ENCODE measurements at regions of chr6 and their contacts with region 1.

Region 1: GRCh38 chr6:88963139-88964090 is at the start of gene RNGTT:
- DNase-seq: peak; percentile 97
- H3K4me3 Mint-ChIP-seq: peak within 1 kb of the TSS; percentile 98
- H3K27ac Mint-ChIP-seq: peak within 1 kb of the TSS; percentile 84
- H3K4me1 Mint-ChIP-seq: peaks cover 33% of the 10 kb centered on the region
- H3K27me3 Mint-ChIP-seq: peaks cover 7% of the 10 kb centered on the region
- total RNA-seq, gene RNGTT: 21.6 and 25.3 TPM in 2 replicates

Region 2: DNA sequence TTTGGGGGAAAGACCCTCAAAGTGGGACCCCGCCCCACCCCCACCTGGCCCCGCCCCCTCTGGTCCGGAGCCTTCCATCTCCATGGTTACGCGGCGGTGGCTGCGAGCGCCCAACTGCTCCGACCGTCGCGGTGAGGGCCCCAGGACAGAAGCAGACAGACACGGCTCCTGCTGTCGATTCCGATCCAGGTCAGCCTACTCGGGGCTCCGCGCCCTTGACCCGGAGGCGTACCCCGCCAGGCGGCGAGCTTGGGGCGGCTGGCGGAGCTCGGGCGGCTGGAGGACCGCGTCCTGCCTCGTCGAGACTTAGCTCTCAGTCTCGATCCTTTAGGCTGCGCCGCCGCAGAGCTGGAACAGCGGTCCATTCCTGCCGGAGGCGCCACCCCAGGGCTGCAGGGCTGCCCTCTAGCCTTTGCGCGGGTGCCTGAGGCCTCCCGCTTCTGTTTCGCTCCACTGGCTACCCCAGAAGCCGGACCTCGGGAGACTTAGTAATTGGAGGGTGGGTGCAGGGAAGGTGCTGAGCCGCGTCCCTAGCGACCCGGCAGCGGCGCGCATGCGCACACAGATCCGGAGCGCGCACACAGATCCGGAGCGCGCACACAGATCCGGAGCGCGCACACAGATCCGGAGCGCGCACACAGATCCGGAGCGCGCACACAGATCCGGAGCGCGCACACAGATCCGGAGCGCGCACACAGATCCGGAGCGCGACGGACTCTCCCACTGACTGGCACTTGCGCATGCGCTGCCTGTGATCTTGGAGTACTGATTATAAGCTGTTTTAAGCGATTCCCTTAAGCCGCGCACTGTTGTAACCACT is 1555.3 kb before region 1 on chr6 and contains the start of gene CFAP206:
- intact Hi-C with region 1: loop called (anchors 5 kb)
- DNase-seq: peak; percentile 66
- H3K4me3 Mint-ChIP-seq: peak within 1 kb of the TSS; percentile 84
- H3K27ac Mint-ChIP-seq: peak within 1 kb of the TSS; percentile 76
- H3K4me1 Mint-ChIP-seq: peaks cover 16% of the 10 kb centered on the region
- H3K27me3 Mint-ChIP-seq: peaks cover 28% of the 10 kb centered on the region
- total RNA-seq, gene CFAP206: 0.20 TPM in 1 of 2 replicates, not detected in the other

Region 3: GRCh38 chr6:87589693-87590549 is 1373.5 kb before region 1 on chr6 and contains the starts of genes ORC3 and RARS2:
- intact Hi-C with region 1: loop called (anchors 1 kb)
- DNase-seq: peak; percentile 96
- H3K4me3 Mint-ChIP-seq: peak within 1 kb of the TSS; percentile 90
- H3K27ac Mint-ChIP-seq: peak within 1 kb of the TSS; percentile 79
- H3K4me1 Mint-ChIP-seq: peaks cover 42% of the 10 kb centered on the region
- H3K27me3 Mint-ChIP-seq: no peaks in the 10 kb centered on the region
- total RNA-seq, gene ORC3: 34.7 and 38.6 TPM in 2 replicates
- total RNA-seq, gene RARS2: 24.6 and 24.7 TPM in 2 replicates

Region 4: DNA sequence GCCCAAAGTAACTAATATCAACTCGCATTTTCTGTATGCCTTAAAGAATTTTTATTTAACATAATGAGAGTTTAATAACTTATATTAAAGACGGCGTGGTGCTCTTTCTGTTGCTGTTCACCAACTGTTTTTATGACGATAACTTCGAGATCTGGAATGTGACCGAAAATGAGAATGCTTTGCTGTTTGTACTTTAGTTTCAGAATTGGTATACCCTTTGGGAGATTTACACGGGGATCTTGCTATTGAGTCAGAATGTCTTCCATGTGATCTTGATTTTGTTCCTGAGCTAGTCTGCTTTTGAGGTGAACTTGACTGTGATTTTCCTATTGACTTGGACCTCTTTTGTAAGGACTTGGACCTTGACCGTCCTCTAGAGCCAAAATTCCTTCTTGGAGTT is 135.0 kb after region 1 on chr6:
- intact Hi-C with region 1: no loop called
- DNase-seq: no peak
- H3K4me3 Mint-ChIP-seq: no peak overlapping the region
- H3K27ac Mint-ChIP-seq: no peak overlapping the region
- H3K4me1 Mint-ChIP-seq: peaks cover 7% of the 10 kb centered on the region
- H3K27me3 Mint-ChIP-seq: no peaks in the 10 kb centered on the region

Region 5: DNA sequence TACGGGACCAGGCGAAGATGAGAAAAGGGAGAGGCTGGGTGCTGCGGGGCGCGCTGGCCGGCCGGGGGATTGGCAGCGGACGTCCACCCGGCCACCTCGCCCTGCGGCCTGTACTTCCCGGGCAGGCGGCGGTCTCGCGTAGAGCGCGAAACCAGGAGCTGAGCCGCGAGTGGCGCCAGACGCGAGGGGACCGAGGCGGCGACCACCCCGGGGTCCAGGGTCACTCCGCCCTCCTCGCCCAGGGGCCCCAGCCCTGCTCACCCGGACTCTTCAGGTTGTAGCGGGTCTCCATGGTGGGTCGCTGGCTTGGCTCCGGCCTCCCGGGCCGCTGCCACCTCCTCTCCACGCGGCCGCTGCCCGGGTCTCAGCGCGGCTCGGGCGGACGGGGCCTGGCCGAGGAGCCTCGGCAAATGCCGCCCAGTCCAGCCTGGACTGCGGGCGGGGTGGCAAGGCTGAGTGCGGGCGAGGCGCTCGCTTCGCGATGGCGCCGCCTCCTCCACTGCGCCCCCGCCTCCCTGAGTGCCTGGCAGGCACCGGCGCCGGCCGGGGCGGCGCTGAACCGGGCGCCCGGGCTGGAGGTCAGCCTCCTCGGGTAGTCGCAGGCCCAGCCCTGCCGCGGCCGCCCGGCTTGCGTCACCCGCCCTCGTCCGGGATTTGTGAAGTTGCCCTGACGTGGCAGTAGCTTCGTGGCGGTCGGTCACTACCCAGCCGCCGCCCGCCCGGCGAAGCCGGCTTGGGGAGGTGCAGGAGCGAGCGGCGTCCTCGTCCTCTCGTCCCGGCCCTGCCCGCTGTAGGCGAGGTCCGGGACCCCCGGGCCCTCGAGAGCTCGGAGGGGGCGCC is 389.1 kb after region 1 on chr6 and contains the start of gene UBE2J1:
- intact Hi-C with region 1: loop called (anchors 1 kb)
- DNase-seq: peak; percentile 75
- H3K4me3 Mint-ChIP-seq: peak within 1 kb of the TSS; percentile 96
- H3K27ac Mint-ChIP-seq: peak within 1 kb of the TSS; percentile 96
- H3K4me1 Mint-ChIP-seq: peaks cover 82% of the 10 kb centered on the region
- H3K27me3 Mint-ChIP-seq: no peaks in the 10 kb centered on the region
- total RNA-seq, gene UBE2J1: 38.1 and 40.5 TPM in 2 replicates

Region 6: DNA sequence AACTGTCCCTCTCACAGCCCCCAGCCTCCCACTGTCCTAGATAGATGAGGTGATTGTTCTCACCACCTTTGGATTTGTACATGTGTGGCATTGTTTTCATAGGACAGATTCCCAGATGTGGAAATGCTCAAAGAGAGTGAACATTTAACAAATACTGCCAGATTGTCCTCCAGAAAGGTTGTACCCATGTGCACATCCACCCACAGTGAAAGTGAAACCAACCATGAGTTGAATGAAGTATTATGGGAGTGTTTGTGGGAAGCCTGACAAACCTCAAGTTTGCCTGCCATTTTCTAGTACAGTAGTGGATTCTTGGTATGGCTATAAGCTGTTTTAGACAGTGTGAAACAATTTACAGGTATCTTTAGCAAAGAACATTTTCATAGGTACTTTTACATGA is 512.2 kb after region 1 on chr6:
- intact Hi-C with region 1: loop called (anchors 1 kb)
- DNase-seq: peak; percentile 38
- H3K4me3 Mint-ChIP-seq: peak overlapping the region; percentile 5
- H3K27ac Mint-ChIP-seq: peak overlapping the region; percentile 37
- H3K4me1 Mint-ChIP-seq: peaks cover 27% of the 10 kb centered on the region
- H3K27me3 Mint-ChIP-seq: peaks cover 3% of the 10 kb centered on the region

Region 7: GRCh38 chr6:90586836-90587638 is 1623.6 kb after region 1 on chr6 and contains the start of gene MAP3K7:
- intact Hi-C with region 1: loop called (anchors 1 kb)
- DNase-seq: peak; percentile 92
- H3K4me3 Mint-ChIP-seq: peak within 1 kb of the TSS; percentile 93
- H3K27ac Mint-ChIP-seq: peak within 1 kb of the TSS; percentile 96
- H3K4me1 Mint-ChIP-seq: peaks cover 39% of the 10 kb centered on the region
- H3K27me3 Mint-ChIP-seq: peaks cover 8% of the 10 kb centered on the region
- total RNA-seq, gene MAP3K7: 31.0 and 35.9 TPM in 2 replicates

Measured in activated T-helper 1 cell treated with anti-CD3 and anti-CD28 coated beads, Interleukin-12 subunit alpha, Interleukin-12 subunit beta, Interleukin-2, Interleukin-4 antibody, amounts not matched to agents 30 ng/mL and 10 ng/mL and 1 ng/mL, durations not matched to agents 14 hours and 24 hours and 36 hours (primary cell).